ENCODE measurements at regions of chr1 and their contacts with region 1.

Region 1: DNA sequence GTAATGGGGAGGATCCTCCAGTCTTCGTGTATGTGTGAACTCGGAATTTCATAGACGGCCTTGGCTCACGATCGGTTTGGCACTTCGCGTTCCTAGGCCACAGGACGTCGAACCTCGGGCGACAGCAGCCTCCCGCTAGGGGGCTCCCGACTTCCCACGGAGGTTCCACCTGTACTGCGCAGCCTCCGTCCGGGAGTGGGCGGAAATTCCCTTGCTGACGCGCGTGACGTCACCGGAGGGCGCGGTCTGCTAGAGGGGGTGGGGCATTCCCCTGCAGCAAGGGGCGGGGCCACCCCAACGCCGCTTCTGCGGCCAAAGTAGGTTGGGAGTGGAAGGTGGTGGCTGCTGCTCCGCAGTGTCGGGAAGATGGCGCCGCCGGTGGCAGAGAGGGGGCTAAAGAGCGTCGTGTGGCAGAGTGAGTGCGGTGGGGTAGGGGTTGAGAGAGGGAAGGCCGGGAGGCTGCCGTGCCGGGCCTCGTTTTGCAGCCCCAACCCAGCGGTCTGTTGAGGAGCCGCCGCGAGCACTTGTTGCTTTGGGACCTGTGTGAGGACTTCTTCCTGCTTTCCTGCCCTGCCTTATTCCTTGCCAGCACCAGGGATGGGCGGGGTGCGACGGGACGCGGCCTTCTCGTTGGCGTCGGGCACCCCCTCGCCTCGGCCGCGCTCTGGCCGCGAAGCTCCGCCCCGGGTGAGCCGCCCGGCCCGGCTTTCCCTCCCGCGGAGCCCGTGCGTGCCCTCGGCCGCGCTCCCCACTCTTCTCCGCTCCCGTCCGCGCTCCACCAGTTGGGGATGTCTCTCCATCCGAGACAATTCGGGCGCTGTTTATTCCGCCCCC is at the start of gene STXBP3:
- DNase-seq: peak; percentile 99 to 100 (median 100)
- ATAC-seq: peak; percentile 92
- H3K4me3 ChIP-seq: peak within 1 kb of the TSS; percentile 72 to 98
- H3K4me3 Mint-ChIP-seq: peak within 1 kb of the TSS; percentile 98
- H3K27ac ChIP-seq: peak within 1 kb of the TSS; percentile 82 to 97
- H3K27ac Mint-ChIP-seq: peak within 1 kb of the TSS; percentile 99
- H3K4me1 ChIP-seq: peaks cover 26% of the 10 kb centered on the region
- H3K4me1 Mint-ChIP-seq: peaks cover 34% of the 10 kb centered on the region
- H3K27me3 ChIP-seq: no peaks in the 10 kb centered on the region
- H3K27me3 Mint-ChIP-seq: no peaks in the 10 kb centered on the region
- CTCF ChIP-seq: peak; percentile 84
- total RNA-seq, gene STXBP3: 49.0 to 50.4 TPM

Region 2: GRCh38 chr1:108512239-108512981 is 234.2 kb before region 1 on chr1:
- CTCF ChIA-PET with region 1: no interaction called
- POLR2A ChIA-PET with region 1: no interaction called
- intact Hi-C with region 1: loop called in 1 of 2 experiments (anchors 2 kb)
- DNase-seq: peak in 2 of 9 experiments; percentile 65 to 75
- ATAC-seq: peak; percentile 69
- H3K4me3 ChIP-seq: no peak overlapping the region
- H3K4me3 Mint-ChIP-seq: no peak overlapping the region
- H3K27ac ChIP-seq: no peak overlapping the region
- H3K27ac Mint-ChIP-seq: no peak overlapping the region
- H3K4me1 ChIP-seq: no peaks in the 10 kb centered on the region
- H3K4me1 Mint-ChIP-seq: no peaks in the 10 kb centered on the region
- H3K27me3 ChIP-seq: no peaks in the 10 kb centered on the region
- H3K27me3 Mint-ChIP-seq: peaks cover 21% of the 10 kb centered on the region
- CTCF ChIP-seq: peak; percentile 99

Region 3: DNA sequence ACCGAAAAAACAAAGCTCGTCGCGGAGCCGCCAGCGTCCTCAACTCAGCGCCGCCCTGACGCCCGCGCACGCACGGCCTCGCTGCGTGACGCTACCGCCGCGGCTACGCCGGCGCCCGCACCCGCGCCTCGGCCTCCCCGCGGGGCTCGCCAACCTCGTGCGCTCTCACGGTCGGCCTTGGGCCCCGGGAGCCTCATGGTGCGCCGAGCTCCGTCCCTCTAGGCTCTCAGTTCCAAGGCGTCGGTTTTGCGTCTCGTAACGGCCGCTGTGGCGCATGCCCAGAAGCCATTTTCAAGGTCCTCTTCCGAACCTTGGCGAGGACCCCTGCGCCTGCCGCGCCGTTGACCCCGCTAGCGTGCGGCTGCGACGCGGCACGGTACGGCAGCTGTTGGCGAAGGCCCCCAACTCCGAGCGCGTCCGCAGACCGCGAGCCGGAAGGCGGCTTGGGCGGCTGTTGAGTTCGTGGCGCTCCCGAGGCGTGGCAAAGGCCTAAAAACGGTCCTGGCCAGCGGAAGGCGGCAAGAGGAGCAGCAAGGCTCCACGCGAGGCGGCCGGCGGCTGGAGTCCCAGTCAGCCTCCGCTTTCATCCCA is 85.5 kb before region 1 on chr1 and contains the start of gene HENMT1:
- CTCF ChIA-PET with region 1: no interaction called
- POLR2A ChIA-PET with region 1: no interaction called
- intact Hi-C with region 1: loop called (anchors 1 kb)
- DNase-seq: peak; percentile 62 to 95 (median 82)
- ATAC-seq: peak; percentile 84
- H3K4me3 ChIP-seq: peak within 1 kb of the TSS; percentile 57 to 66
- H3K4me3 Mint-ChIP-seq: peak within 1 kb of the TSS; percentile 81
- H3K27ac ChIP-seq: peak within 1 kb of the TSS; percentile 90 to 98
- H3K27ac Mint-ChIP-seq: peak within 1 kb of the TSS; percentile 97
- H3K4me1 ChIP-seq: peaks cover 24% of the 10 kb centered on the region
- H3K4me1 Mint-ChIP-seq: peaks cover 50% of the 10 kb centered on the region
- H3K27me3 ChIP-seq: no peaks in the 10 kb centered on the region
- H3K27me3 Mint-ChIP-seq: no peaks in the 10 kb centered on the region
- CTCF ChIP-seq: no peak
- total RNA-seq, gene HENMT1: 7.5 to 8.3 TPM

Region 4: GRCh38 chr1:108897865-108898720 is 151.5 kb after region 1 on chr1:
- CTCF ChIA-PET with region 1: no interaction called
- POLR2A ChIA-PET with region 1: interaction called, 4 read pairs
- intact Hi-C with region 1: loop called in 1 of 2 experiments (anchors 5 kb)
- DNase-seq: peak in 5 of 9 experiments; percentile 9 to 74 (median 35)
- ATAC-seq: peak; percentile 78
- H3K4me3 ChIP-seq: no peak overlapping the region
- H3K4me3 Mint-ChIP-seq: no peak overlapping the region
- H3K27ac ChIP-seq: no peak overlapping the region
- H3K27ac Mint-ChIP-seq: no peak overlapping the region
- H3K4me1 ChIP-seq: no peaks in the 10 kb centered on the region
- H3K4me1 Mint-ChIP-seq: no peaks in the 10 kb centered on the region
- H3K27me3 ChIP-seq: no peaks in the 10 kb centered on the region
- H3K27me3 Mint-ChIP-seq: peaks cover 2% of the 10 kb centered on the region
- CTCF ChIP-seq: peak; percentile 68

Region 5: DNA sequence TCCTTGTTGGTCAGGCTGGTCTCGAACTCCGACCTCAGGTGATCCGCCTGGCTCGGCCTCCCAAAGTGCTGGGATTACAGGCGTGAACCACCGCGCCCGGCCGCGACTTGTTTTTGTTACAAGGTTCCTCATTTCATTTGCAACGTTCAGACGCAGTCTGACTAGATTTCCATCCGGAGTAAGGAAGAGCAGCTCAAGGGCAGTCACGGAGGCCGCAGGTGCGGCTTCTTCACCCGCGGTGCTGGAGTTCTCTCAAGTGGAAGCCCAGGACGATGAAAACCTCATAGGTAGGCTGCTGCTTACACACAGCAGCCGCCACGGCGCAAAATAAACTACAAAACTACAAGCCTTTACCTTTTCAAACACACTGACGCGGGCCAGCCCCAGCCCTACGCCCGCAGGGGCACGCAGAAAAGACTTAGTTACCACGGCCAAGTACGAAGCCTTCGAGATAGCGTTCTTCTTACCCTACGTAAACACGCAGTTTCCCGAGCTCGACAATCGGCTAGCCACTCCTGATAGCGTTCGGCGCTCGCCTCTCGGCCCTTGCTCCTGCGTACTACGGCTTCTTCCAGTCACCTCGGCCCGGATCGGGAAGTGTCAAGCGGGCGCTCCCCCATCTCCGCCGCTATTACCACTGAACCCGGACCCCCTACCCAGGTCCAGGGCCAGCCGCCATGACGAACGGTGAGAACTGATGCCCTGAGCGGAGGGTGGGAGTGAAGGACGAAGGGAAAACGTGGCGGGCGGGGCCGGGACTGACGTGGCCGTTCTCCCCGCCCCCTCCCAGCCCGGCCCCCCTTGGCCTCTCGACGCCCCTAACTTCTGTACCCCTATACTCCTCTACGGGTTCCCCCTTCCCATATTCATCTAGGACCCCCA is 343.8 kb after region 1 on chr1 and contains the start of gene TMEM167B:
- CTCF ChIA-PET with region 1: no interaction called
- POLR2A ChIA-PET with region 1: no interaction called
- intact Hi-C with region 1: loop called in 1 of 2 experiments (anchors 5 kb)
- DNase-seq: peak; percentile 76 to 94 (median 88)
- ATAC-seq: peak; percentile 94
- H3K4me3 ChIP-seq: peak within 1 kb of the TSS; percentile 84 to 96
- H3K4me3 Mint-ChIP-seq: peak within 1 kb of the TSS; percentile 96
- H3K27ac ChIP-seq: peak within 1 kb of the TSS; percentile 82 to 98
- H3K27ac Mint-ChIP-seq: peak within 1 kb of the TSS; percentile 95
- H3K4me1 ChIP-seq: peaks cover 20% of the 10 kb centered on the region
- H3K4me1 Mint-ChIP-seq: peaks cover 33% of the 10 kb centered on the region
- H3K27me3 ChIP-seq: no peaks in the 10 kb centered on the region
- H3K27me3 Mint-ChIP-seq: no peaks in the 10 kb centered on the region
- CTCF ChIP-seq: no peak
- total RNA-seq, gene TMEM167B: 66.3 to 68.0 TPM

Region 6: DNA sequence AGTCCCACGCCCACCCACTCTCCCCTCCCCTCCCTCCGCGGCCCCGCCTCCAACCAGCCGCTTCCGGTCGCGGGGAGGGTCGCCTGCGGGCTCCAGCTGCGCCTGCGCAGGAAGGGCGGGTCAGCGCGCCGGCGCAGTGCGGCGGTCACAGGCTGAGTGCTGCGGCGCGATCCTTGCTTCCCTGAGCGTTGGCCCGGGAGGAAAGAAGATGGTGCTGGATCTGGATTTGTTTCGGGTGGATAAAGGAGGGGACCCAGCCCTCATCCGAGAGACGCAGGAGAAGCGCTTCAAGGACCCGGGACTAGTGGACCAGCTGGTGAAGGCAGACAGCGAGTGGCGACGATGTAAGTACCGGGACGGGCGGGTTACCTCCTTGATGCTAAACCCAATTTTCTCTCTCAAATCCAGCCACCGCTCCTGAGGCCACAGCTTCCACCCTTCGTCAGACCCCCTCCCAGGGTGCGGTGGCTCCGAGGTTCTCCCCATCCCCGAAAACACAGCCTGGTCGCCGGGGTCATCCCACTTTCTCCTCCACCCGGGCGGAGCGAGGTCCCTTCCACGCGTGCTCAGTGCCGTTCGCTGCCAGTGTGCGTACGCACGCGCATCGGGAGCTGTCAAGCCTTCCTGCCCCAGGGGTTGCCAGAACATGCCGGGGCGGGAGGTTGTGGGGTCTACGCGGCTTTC is 467.3 kb after region 1 on chr1 and contains the start of gene SARS1:
- CTCF ChIA-PET with region 1: no interaction called
- POLR2A ChIA-PET with region 1: no interaction called
- intact Hi-C with region 1: loop called in 1 of 2 experiments (anchors 10 kb)
- DNase-seq: peak; percentile 67 to 94 (median 85)
- ATAC-seq: peak; percentile 86
- H3K4me3 ChIP-seq: peak within 1 kb of the TSS; percentile 96 to 100
- H3K4me3 Mint-ChIP-seq: peak within 1 kb of the TSS; percentile 100
- H3K27ac ChIP-seq: peak within 1 kb of the TSS; percentile 79
- H3K27ac Mint-ChIP-seq: peak within 1 kb of the TSS; percentile 95
- H3K4me1 ChIP-seq: peaks cover 27% of the 10 kb centered on the region
- H3K4me1 Mint-ChIP-seq: peaks cover 44% of the 10 kb centered on the region
- H3K27me3 ChIP-seq: no peaks in the 10 kb centered on the region
- H3K27me3 Mint-ChIP-seq: peaks cover 2% of the 10 kb centered on the region
- CTCF ChIP-seq: no peak
- total RNA-seq, gene SARS1: 113 to 118 TPM

Measured in CD8-positive, alpha-beta T cell (primary cell).